A549 (cell line): ENCODE measurements at regions of chr1 and their contacts with region 1.

Region 1: DNA sequence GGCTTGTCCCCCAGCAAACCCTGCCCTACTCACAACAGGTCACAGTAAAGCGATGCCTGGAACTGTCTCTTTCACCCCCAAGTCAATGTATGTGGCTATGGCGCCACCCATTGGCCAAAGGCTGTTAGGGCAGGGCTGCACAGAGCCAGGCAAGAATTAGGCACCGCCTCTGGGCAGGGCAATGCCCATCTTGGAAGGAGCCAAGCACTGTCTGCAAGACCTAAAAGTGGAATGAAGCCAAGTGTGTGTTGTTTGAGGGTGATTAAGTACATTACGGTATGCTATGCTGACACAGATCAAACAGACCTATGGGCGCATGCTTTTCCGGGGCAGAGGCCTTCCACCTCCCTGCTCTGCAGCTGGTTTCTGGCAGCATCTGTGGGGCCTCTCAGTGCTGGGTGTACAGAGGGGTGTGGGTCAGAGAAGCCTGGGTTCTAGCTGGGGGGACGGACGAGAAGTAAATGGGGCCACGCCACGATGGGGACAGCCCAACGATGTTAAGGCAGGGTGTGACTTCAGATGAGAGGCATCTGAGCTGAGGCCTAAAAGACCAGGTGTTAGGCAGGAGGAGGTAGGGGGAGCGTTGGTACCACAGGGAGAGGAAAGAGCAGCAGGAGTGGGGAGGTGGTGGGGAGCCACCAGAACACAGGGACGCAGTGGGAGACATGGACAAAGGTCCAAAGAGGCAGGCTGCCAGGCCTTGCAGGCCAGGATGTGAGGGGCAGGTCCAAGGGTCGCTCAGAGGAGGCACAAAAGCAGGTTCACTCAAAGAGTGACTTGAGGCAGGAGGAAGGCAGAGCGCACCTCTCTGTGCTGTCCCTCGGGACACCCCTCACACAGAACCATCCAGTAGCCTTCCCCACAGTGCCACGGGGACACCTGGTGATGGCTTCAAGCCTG is 49.8 kb downstream of the ACOT7 start:
- DNase-seq: peak; percentile 66 to 89
- ATAC-seq: peak; percentile 86 to 93
- H3K4me3 ChIP-seq: no peak overlapping the region
- H3K27ac ChIP-seq: peak overlapping the region; percentile 43 to 77; a peak in 5 of 6 replicates
- H3K4me1 ChIP-seq: peaks cover 19% of the 10 kb centered on the region
- CTCF ChIP-seq: peak; percentile 75
- EP300 ChIP-seq: no peak
- POLR2A ChIP-seq: no peak
- RAD21 ChIP-seq: peak; percentile 83 to 86

Region 2: GRCh38 chr1:6359216-6360116 is 15.7 kb after region 1 on chr1:
- CTCF ChIA-PET with region 1: interaction called, 70 read pairs
- POLR2A ChIA-PET with region 1: no interaction called
- DNase-seq: peak in 1 of 2 experiments; percentile 48
- ATAC-seq: peak; percentile 68 to 70
- H3K4me3 ChIP-seq: no peak overlapping the region
- H3K27ac ChIP-seq: peak overlapping the region; percentile 58 to 82
- H3K4me1 ChIP-seq: peaks cover 29% of the 10 kb centered on the region
- CTCF ChIP-seq: no peak
- EP300 ChIP-seq: no peak
- POLR2A ChIP-seq: no peak
- RAD21 ChIP-seq: no peak

Region 3: GRCh38 chr1:6378096-6378746 is 34.5 kb after region 1 on chr1:
- CTCF ChIA-PET with region 1: interaction called, 13 read pairs
- POLR2A ChIA-PET with region 1: no interaction called
- DNase-seq: no peak
- ATAC-seq: peak; percentile 83 to 87
- H3K4me3 ChIP-seq: no peak overlapping the region
- H3K27ac ChIP-seq: no peak overlapping the region
- H3K4me1 ChIP-seq: no peaks in the 10 kb centered on the region
- CTCF ChIP-seq: peak; percentile 19; the same call in 2 of the 3 replicates
- EP300 ChIP-seq: no peak
- POLR2A ChIP-seq: no peak
- RAD21 ChIP-seq: no peak

Region 4: DNA sequence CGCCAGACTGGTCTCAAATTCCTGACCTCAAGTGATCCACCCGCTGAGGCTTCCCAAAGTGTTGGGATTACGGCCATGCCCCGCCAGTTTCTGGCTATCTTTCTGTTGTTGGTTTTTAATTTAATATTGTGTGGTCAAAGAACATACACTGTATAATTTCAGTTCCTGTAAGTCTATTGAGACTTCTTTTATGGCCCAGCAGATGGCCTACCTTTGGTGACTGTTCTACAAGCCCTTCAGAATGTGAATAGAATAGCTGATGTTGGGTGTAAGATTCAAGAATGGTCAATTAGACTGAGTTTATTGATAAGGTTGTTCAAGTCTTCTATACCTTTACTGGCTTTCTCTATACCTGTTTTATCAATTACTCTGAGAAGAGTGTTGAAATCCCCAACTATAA is 65.3 kb after region 1 on chr1:
- CTCF ChIA-PET with region 1: interaction called, 48 read pairs
- POLR2A ChIA-PET with region 1: no interaction called
- DNase-seq: no peak
- ATAC-seq: no peak
- H3K4me3 ChIP-seq: no peak overlapping the region
- H3K27ac ChIP-seq: no peak overlapping the region
- H3K4me1 ChIP-seq: peaks cover 24% of the 10 kb centered on the region
- CTCF ChIP-seq: no peak
- EP300 ChIP-seq: no peak
- POLR2A ChIP-seq: no peak
- RAD21 ChIP-seq: no peak

Region 5: GRCh38 chr1:6438047-6438525 is 94.3 kb after region 1 on chr1:
- CTCF ChIA-PET with region 1: interaction called, 18 read pairs
- POLR2A ChIA-PET with region 1: no interaction called
- DNase-seq: peak; percentile 73 to 76
- ATAC-seq: peak; percentile 74 to 83
- H3K4me3 ChIP-seq: no peak overlapping the region
- H3K27ac ChIP-seq: no peak overlapping the region
- H3K4me1 ChIP-seq: peaks cover 5% of the 10 kb centered on the region; the same call in 1 of the 3 replicates
- CTCF ChIP-seq: peak; percentile 56
- EP300 ChIP-seq: no peak
- POLR2A ChIP-seq: no peak
- RAD21 ChIP-seq: peak; percentile 50 to 51; a peak in 4 of 5 replicates